ENCODE measurements at regions of chr17 and their contacts with region 1.

Region 1: DNA sequence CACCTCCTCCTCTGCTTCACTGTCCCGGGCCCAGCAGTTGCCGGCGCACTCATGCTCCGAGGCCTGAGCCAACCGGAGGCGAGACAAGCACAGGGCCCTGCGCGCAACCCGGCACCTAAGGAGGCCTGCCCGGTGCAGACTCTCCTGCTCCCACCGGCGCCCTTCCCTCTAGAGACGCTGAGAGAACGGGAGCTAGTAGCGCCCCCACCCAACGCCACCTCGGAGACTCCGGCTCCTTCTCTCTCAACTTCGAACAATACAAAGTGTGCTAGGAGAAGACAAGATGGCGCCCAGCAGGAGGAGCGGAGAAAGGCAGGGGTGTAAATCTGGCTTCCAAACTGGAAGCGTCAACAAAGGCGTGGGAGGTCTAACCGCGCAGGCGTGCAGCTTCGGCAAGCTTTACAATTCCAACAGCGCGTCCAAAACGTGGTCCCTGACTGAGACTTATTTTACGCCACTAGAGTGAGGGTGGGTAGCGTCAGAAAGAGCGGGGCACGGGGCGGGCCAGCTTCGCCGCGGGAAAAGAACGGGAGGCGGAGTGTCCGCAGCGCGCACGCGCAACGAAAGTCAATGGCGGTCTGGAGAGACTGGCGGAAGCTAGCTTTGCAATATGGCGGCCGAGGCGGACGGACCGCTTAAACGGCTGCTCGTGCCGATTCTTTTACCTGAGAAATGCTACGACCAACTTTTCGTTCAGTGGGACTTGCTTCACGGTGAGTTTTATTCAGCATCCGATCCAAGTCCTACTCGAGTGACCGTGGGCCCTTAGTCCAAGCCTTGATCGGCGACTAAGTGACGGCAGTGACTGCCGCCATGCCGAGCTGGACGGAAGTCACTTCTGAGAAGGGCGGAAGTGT is at the start of gene MPDU1:
- DNase-seq: peak; percentile 97 to 98
- H3K4me3 ChIP-seq: peak within 1 kb of the TSS; percentile 64 to 66
- H3K27ac ChIP-seq: peak within 1 kb of the TSS; percentile 96
- H3K4me1 ChIP-seq: peaks cover 7% of the 10 kb centered on the region in 2 donors
- H3K27me3 ChIP-seq: no peaks in the 10 kb centered on the region
- CTCF ChIP-seq: peak in 2 of 4 experiments; percentile 18 to 27
- POLR2A ChIP-seq: peak; percentile 60 to 73
- total RNA-seq, gene MPDU1: 2.6 to 63.6 (median 35.0) TPM

Region 2: DNA sequence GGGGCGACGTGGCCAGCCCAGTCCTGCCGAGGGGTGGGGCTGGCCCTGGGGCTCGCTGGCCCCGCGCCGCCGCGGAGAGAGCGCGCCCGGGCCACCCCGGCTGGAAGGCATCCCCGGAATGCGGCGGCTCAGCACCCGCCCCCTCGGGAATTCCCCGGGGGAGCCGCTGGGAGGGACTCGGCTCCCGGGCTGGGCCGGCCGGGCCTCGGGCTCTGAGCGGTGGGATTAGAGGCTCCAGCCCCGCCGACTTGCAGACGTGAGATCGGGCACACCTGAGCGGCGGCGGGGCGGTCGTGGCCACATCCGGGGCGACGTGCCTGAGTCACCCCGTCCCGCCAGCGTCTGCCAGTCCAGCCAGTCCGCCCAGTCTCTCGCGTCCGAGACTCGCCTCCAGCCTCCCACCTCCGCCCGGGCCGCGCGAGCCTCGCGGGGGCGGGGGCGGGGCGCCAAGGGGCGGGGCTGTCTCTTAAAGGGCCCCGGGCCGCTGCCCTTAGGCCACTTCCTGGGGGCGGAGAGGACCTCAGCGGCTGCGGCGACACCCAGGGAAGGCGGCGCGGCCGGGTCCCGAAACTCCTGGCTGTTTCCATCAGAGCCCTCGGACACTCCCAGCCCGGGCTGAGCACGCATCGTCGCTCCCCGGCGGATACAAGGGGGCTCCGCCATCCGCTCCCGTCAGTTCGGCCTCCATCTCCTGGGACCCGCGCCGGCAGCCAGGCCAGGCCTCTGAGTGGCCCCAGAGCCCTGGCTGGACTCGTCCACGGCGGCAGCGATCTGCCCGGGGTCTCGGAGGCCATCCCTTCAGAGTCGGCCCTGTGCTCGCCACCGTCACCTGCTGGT is 231.6 kb before region 1 on chr17 and contains the start of gene KCTD11:
- intact Hi-C with region 1: loop called (anchors 10 kb)
- DNase-seq: peak; percentile 88 to 93
- H3K4me3 ChIP-seq: peak within 1 kb of the TSS; percentile 76 to 97
- H3K27ac ChIP-seq: peak within 1 kb of the TSS; percentile 95 to 97
- H3K4me1 ChIP-seq: peaks cover 0 to 8% of the 10 kb centered on the region in 2 donors
- H3K27me3 ChIP-seq: no peaks in the 10 kb centered on the region
- CTCF ChIP-seq: peak in 2 of 4 experiments; percentile 41 to 55
- POLR2A ChIP-seq: peak; percentile 19 to 65
- total RNA-seq, gene KCTD11: 2.6 to 14.7 (median 7.2) TPM

Region 3: GRCh38 chr17:7650509-7651096 is 67.1 kb after region 1 on chr17 and contains the start of gene ATP1B2:
- intact Hi-C with region 1: no loop called
- DNase-seq: peak; percentile 72 to 83
- H3K4me3 ChIP-seq: peak within 1 kb of the TSS; percentile 44 to 55
- H3K27ac ChIP-seq: peak within 1 kb of the TSS; percentile 56 to 81
- H3K4me1 ChIP-seq: no peaks in the 10 kb centered on the region
- H3K27me3 ChIP-seq: no peaks in the 10 kb centered on the region
- CTCF ChIP-seq: no peak
- POLR2A ChIP-seq: no peak
- total RNA-seq, gene ATP1B2: 3.2 to 20.7 (median 8.0) TPM

Measured in uterus (tissue), 4 donors.